Activated CD4-positive, alpha-beta memory T cell treated with anti-CD3 and anti-CD28 coated beads for 36 hours (primary cell): ENCODE measurements at regions of chr12 and their contacts with region 1.

Region 1: DNA sequence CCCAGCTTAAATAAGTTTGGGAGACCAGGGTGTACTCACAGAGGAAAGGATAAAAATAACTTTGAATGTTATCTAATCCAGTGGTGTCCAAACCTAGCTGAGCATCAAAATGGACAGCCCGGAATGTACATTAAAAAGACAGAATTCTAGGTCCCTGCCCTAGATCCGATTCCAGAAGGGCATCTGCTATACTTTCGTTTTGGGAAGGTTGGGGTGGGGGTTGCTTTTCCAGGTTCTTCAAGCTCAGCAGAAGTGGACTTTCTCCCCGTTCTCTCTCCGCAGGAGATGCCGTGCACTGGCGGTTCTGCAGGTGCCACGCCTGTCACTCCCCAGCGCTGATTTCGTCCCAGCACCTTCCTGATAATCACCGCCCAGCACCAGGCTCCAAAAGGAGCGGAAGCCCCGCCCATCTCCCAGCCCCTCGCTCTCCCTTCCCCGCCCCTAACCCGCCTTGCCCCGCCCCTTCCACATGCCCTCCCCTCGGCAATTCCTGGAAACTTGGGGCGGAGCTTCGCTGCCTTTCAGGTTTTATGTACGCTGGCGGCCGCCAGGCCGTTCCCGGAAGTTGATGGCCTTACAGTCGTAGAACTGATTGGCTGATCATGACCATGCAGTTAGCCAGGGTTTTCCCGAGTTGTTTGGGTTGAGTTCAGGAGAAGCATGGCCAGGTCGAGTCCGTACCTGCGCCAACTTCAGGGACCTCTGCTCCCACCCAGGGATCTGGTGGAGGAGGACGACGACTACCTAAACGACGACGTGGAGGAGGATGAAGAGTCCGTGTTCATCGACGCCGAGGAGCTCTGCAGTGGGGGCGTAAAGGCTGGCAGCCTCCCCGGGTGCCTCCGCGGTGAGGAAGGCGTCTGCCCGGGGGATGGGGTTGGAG is at the start of gene HELB:
- DNase-seq: peak; percentile 99
- H3K4me3 Mint-ChIP-seq: peak within 1 kb of the TSS; percentile 99
- H3K27ac Mint-ChIP-seq: peak within 1 kb of the TSS; percentile 99
- H3K4me1 Mint-ChIP-seq: peaks cover 39% of the 10 kb centered on the region
- H3K27me3 Mint-ChIP-seq: no peaks in the 10 kb centered on the region
- total RNA-seq, gene HELB: 20.8 to 21.8 TPM

Region 2: GRCh38 chr12:65169320-65170208 is 1132.6 kb before region 1 on chr12 and contains the start of gene LEMD3:
- CTCF ChIA-PET with region 1: no interaction called
- POLR2A ChIA-PET with region 1: interaction called, 4 read pairs
- intact Hi-C with region 1: loop called (anchors 10 kb)
- DNase-seq: peak; percentile 95
- H3K4me3 Mint-ChIP-seq: peak within 1 kb of the TSS; percentile 99
- H3K27ac Mint-ChIP-seq: peak within 1 kb of the TSS; percentile 97
- H3K4me1 Mint-ChIP-seq: peaks cover 26% of the 10 kb centered on the region
- H3K27me3 Mint-ChIP-seq: no peaks in the 10 kb centered on the region
- total RNA-seq, gene LEMD3: 16.5 to 19.5 TPM

Region 3: GRCh38 chr12:66169221-66170170 is 132.7 kb before region 1 on chr12 and contains the start of gene TMBIM4:
- CTCF ChIA-PET with region 1: interaction called, 14 read pairs
- POLR2A ChIA-PET with region 1: interaction called, 10 read pairs
- intact Hi-C with region 1: loop called (anchors 1 kb)
- DNase-seq: peak; percentile 93
- H3K4me3 Mint-ChIP-seq: peak within 1 kb of the TSS; percentile 97
- H3K27ac Mint-ChIP-seq: peak within 1 kb of the TSS; percentile 99
- H3K4me1 Mint-ChIP-seq: peaks cover 47% of the 10 kb centered on the region
- H3K27me3 Mint-ChIP-seq: no peaks in the 10 kb centered on the region
- total RNA-seq, gene TMBIM4: 63.7 to 66.7 TPM

Region 4: DNA sequence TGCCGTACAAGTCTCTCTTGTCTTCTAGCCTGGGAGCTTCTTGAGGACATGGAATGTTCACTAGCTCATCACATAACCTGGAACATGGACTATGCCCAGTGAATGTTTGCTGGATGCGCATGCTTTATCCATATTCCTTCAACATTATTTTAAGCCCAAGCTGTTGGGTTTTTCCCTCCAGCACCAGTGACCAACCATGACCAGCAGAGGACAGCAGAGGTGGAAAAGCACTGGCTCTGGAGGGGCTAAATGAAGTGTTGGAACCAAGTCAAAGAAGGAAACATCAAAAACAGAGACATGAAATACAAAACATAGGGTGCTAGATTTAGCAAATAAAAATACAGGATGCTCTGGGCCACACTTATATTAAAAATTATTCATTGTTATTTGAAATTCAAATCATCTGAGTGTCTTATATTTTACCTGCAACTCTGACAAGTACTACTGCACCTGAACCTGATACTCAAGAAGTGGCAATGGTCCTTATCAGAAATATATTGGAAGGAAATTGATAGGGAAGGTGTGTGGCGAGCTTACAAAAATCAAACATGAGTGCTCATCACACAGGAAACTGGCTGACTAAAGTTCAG is 23.0 kb before region 1 on chr12:
- CTCF ChIA-PET with region 1: interaction called, 3 read pairs
- POLR2A ChIA-PET with region 1: interaction called, 3 read pairs
- intact Hi-C with region 1: loop called (anchors 1 kb)
- DNase-seq: peak; percentile 60
- H3K4me3 Mint-ChIP-seq: no peak overlapping the region
- H3K27ac Mint-ChIP-seq: no peak overlapping the region
- H3K4me1 Mint-ChIP-seq: peaks cover 38% of the 10 kb centered on the region
- H3K27me3 Mint-ChIP-seq: no peaks in the 10 kb centered on the region

Region 5: DNA sequence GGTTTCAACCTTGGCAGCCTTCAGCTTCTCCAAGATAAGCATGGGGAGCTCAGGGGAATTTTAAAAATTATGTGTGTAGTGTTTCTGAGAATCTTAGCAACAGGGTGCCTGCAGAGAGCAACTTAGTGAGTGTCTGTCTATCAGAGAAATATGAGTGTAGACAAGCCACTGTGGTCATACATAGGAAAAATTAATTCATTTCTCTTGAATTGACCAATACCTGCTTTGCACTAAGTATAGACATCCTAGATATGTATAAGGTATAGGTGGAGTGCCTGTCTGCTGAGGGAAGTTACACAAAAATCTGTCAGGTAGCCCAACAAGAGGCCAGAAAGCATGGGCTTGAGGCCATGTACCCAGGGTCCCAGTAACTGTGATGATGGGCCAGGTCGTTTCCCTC is 20.8 kb after region 1 on chr12:
- CTCF ChIA-PET with region 1: no interaction called
- POLR2A ChIA-PET with region 1: interaction called, 3 read pairs
- intact Hi-C with region 1: loop called (anchors 2 kb)
- DNase-seq: no peak
- H3K4me3 Mint-ChIP-seq: no peak overlapping the region
- H3K27ac Mint-ChIP-seq: no peak overlapping the region
- H3K4me1 Mint-ChIP-seq: peaks cover 30% of the 10 kb centered on the region
- H3K27me3 Mint-ChIP-seq: no peaks in the 10 kb centered on the region

Region 6: GRCh38 chr12:67592216-67593011 is 1290.2 kb after region 1 on chr12:
- CTCF ChIA-PET with region 1: no interaction called
- POLR2A ChIA-PET with region 1: no interaction called
- intact Hi-C with region 1: loop called (anchors 5 kb)
- DNase-seq: no peak
- H3K4me3 Mint-ChIP-seq: no peak overlapping the region
- H3K27ac Mint-ChIP-seq: peak overlapping the region; percentile 67
- H3K4me1 Mint-ChIP-seq: peaks cover 47% of the 10 kb centered on the region
- H3K27me3 Mint-ChIP-seq: no peaks in the 10 kb centered on the region